Activated naive CD4-positive, alpha-beta T cell treated with anti-CD3 and anti-CD28 coated beads, Interleukin-2, amount 10 ng/mL, durations not matched to agents 7 days and 5 days (primary cell): ENCODE measurements at regions of chr6 and their contacts with region 1.

Region 1: DNA sequence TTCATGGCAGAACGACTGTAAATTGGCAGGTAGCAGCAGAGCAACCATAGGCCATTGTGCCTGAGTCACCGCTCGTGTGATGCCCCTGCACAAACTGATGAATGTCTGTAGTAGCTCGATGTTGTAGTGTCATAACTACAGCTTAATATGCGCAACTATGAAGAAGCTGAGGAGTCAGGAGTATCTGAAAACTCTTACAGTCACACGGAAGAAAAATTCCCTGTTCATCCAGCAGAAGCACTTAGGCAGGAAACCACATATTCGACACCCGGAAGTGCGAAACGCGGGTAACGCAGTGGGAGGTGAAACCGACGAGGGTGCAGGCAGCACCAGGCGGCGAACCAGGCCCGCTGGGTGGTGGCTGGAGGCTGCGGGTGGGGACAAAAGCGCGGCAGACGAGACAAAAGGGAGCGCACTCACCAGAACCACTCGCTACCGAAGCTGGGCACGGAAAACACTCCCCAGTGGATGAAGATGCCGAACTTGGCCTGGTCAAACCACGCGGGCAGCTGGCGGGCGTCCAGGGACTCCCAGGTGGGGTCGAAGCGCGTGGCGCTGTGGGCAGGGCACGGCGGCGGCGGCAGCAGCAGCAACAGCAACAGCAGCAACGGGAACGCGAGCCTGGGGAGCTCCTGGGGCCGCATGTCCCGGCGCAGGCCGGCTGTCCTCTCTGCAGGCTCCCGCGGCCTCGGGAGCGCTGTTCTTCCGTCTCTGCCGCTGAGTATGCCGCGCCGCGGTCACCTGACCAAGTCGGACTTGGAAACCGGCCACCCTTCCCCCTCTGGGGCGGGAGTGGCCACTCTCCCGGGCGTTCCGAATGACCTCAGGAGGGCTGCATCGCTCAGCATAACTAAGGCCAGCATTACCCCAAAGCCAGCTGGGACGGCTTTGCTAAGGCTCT is at the start of gene FUCA2:
- DNase-seq: peak; percentile 78
- H3K4me3 Mint-ChIP-seq: peak within 1 kb of the TSS; percentile 87
- H3K27ac Mint-ChIP-seq: peak within 1 kb of the TSS; percentile 92
- H3K4me1 Mint-ChIP-seq: peaks cover 30% of the 10 kb centered on the region
- H3K27me3 Mint-ChIP-seq: peaks cover 13% of the 10 kb centered on the region

Region 2: DNA sequence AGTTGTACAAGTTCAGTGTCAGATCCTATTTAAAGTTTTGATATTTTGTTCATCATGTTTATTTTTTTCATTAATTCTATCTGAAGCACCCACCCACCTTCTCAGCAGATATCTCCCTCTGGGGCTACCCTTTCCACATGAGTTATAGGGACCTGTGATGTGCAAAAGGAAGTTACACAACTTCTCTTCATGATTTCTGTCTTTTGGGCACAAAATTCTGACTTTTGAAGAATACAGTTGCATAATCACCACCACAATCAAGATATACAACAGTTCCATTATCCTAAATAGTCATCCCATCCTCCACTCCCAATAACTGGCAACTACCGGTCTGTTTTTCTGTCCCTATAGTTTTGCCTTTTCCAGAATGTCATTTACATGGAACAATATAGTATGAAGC is 14.1 kb after region 1 on chr6:
- CTCF ChIA-PET with region 1: interaction called, 25 read pairs
- DNase-seq: no peak
- H3K4me3 Mint-ChIP-seq: no peak overlapping the region
- H3K27ac Mint-ChIP-seq: no peak overlapping the region
- H3K4me1 Mint-ChIP-seq: peaks cover 22% of the 10 kb centered on the region
- H3K27me3 Mint-ChIP-seq: no peaks in the 10 kb centered on the region

Region 3: GRCh38 chr6:143536865-143537691 is 25.8 kb after region 1 on chr6:
- CTCF ChIA-PET with region 1: interaction called, 53 read pairs
- DNase-seq: peak; percentile 79
- H3K4me3 Mint-ChIP-seq: peak overlapping the region; percentile 82
- H3K27ac Mint-ChIP-seq: peak overlapping the region; percentile 91
- H3K4me1 Mint-ChIP-seq: peaks cover 53% of the 10 kb centered on the region
- H3K27me3 Mint-ChIP-seq: no peaks in the 10 kb centered on the region

Region 4: DNA sequence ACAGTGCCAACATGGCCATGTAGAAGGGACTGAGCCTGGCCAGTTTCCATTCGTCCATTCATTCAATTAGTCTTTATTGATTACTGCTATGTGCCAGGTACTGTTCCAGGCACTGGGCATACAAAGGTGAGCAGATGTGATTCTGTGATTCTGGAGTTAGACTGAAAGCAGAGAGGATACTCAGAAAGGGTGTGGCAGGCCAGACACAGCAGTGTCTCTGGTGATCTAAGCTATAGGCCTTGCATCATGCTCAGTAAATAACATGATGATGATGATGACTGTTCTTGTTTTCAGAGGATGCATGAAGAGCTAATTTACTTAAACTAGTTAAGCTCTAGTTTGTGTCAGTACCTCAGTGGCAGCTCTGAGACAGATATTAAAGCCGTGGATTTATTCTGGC is 31.6 kb after region 1 on chr6:
- CTCF ChIA-PET with region 1: interaction called, 53 read pairs
- DNase-seq: peak; percentile 28
- H3K4me3 Mint-ChIP-seq: no peak overlapping the region
- H3K27ac Mint-ChIP-seq: peak overlapping the region; percentile 84
- H3K4me1 Mint-ChIP-seq: peaks cover 85% of the 10 kb centered on the region
- H3K27me3 Mint-ChIP-seq: no peaks in the 10 kb centered on the region

Region 5: GRCh38 chr6:143575440-143575839 is 64.2 kb after region 1 on chr6:
- CTCF ChIA-PET with region 1: interaction called, 28 read pairs
- DNase-seq: peak; percentile 54
- H3K4me3 Mint-ChIP-seq: no peak overlapping the region
- H3K27ac Mint-ChIP-seq: no peak overlapping the region
- H3K4me1 Mint-ChIP-seq: no peaks in the 10 kb centered on the region
- H3K27me3 Mint-ChIP-seq: no peaks in the 10 kb centered on the region

Region 6: GRCh38 chr6:144013486-144013909 is 502.3 kb after region 1 on chr6:
- CTCF ChIA-PET with region 1: interaction called, 23 read pairs
- DNase-seq: peak; percentile 73
- H3K4me3 Mint-ChIP-seq: no peak overlapping the region
- H3K27ac Mint-ChIP-seq: no peak overlapping the region
- H3K4me1 Mint-ChIP-seq: peaks cover 2% of the 10 kb centered on the region
- H3K27me3 Mint-ChIP-seq: peaks cover 38% of the 10 kb centered on the region